ENCODE measurements at regions of chr16 and their contacts with region 1.

Region 1: GRCh38 chr16:70653809-70654771 is 7.7 kb downstream of the IL34 start:
- DNase-seq: no peak
- ATAC-seq: peak; percentile 81

Region 2: DNA sequence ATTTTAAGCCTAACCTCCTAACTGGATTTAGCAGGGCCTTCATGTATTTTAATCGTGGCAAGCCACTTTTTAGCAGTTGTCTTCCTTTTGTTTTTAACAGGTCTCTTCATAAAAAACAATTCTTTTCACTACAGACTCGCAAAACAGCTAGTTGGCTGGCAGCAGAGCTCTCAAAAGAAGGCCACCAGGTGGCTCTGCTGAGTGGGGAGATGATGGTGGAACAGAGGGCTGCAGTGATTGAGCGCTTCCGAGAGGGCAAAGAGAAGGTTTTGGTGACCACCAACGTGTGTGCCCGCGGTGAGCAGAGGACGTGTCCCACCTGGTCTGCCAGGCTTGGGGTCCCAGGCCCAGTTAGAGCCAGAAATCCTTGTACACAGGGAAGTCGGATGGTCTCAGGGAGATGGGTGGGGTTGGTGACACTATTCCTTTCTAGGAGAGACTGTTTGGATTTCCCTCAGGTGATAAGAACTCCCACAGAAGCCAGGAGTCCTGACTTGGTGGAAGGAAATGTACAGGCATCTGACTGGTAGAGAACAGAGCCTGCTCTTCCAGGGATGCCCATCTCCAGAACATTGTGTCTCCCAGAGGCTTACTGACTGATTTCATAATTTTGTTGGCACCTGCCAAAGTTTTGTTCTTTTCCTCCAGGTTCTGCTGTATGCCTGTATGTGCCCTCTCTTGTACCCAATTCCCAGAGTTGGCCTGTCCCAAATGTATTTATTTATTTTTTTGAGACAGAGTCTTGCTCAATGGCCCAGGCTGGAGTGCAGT is 322.3 kb before region 1 on chr16:
- intact Hi-C with region 1: loop called (anchors 2 kb)
- DNase-seq: no peak
- ATAC-seq: peak; percentile 49

Region 3: GRCh38 chr16:70370924-70371323 is 283.2 kb before region 1 on chr16:
- intact Hi-C with region 1: loop called (anchors 2 kb)
- DNase-seq: no peak
- ATAC-seq: no peak

Region 4: DNA sequence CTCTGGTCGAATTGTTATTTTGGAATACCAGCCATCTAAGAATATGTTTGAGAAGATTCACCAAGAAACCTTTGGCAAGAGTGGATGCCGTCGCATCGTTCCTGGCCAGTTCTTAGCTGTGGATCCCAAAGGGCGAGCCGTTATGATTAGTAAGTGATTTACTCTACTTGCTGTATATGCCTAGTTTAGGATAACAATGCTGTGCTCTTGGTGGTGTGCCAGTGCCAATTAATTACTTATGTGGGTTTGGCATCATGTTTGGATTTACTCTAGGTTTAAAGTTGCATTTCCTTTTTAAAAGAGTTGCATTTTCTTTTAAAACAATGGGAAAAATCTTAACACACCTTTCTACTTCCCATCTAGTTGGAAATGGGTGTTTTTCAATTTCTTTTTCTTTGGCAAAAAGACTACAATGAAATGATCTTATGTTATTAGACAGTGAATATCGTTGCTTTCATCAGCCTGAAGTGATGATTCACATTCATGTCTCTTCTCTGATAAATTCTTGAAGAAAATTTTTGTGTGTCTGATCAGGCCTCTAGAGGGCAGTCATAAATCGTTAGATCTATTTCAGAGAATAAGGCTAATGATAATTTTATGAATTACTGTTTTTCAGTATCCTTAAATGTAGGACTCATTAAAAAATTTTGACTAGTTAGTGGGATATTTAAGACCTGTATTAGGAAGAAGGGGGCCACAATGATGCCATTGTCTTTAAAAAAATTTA is 124.9 kb before region 1 on chr16:
- intact Hi-C with region 1: loop called (anchors 2 kb)
- DNase-seq: no peak
- ATAC-seq: no peak

Region 5: GRCh38 chr16:70573451-70574121 is 80.5 kb before region 1 on chr16:
- intact Hi-C with region 1: loop called (anchors 5 kb)
- DNase-seq: peak; percentile 79
- ATAC-seq: peak; percentile 55

Region 6: DNA sequence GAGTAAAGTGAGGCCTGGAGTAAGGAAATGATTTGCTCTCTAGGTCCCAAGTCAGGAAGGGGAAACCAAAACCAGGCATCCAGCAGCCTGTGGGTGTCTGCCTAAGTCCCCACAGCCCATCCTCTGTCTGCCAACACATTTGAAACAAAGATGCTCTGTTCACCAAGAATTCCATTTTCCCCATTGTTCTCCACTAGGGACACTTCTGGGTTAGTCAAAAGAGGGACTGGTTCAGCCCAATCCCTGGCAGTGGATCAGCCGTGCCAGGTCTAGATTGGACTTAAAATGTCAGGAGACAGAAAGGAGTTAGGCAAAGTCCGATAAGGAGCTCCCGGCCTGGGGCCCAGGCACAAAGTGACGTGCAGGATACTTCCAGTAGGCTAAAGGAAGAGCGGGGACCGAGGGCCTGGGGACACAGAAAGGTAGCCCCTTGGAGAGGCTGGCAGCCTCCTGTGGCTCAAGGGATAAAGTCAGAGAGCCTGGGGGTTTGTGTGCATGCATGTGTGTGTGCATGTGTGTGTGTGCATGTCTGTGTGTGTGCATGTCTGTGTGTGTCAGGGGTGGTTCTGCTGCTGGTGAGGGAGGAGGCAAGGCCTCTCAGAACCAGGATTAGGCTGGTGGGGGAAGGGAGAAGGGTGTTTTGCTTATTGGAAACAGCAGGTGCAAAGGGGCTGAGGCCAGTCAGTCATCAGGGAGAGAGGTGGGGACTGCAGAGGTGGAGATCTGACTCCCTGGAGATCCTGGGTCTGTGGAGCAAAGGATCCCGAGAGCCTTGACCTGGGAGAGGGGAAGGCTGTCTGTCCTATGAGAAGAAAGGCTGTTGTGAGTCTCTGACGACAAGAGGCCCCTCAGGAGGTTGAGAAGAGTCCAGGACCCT is 49.4 kb before region 1 on chr16:
- intact Hi-C with region 1: no loop called
- DNase-seq: no peak
- ATAC-seq: no peak

Measured in Right ventricle myocardium inferior (tissue), 1 donor.